Endothelial cell of umbilical vein (primary cell): ENCODE measurements at regions of chr15 and their contacts with region 1.

Region 1: DNA sequence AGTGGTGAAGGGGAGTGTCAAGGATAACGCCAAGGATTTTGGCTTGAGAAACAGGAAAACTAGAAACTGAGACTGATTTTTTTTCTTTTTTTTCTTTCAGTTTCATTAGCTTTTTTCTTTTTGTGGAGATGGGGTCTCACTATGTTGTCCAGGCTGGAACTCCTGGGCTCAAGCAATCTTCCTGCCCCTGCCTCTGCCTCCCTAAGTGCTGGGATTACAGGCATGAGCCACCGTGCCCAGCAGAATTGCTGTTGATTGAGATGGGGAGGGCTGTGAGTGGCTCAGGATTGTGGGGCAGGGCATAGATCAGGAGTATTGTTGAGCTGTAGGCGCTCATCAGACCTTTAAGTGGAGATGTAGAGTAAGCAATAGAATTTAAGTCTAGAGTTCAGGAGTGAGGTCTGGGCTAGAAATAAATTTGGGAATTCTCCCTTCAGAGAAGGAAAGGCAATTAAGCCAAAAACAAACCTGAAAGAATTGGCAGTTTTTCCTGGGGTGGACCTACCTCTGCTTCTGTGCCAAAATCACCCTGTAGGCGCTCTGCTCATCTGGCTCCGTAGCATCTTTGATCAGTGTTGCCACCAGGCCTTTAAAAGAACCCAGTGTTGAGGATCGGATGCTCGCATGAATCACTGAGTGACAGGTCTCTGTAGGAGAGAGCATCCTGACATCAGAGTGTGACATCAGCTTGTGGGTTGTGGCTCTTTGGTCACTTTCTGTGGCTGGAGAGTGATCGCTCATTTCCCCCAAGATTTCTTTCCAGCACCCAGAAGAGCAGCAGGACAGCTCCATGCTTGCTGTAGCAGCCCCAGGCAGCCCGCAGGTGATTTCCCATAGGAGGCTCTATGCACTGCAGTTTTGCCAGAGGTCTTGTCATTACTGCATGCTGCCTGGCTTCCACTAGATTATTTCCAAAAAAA is 15.8 kb downstream of the ABHD17C start:
- DNase-seq: no peak
- H3K4me3 ChIP-seq: no peak overlapping the region
- H3K27ac ChIP-seq: no peak overlapping the region
- H3K4me1 ChIP-seq: no peaks in the 10 kb centered on the region
- H3K27me3 ChIP-seq: no peaks in the 10 kb centered on the region
- CTCF ChIP-seq: no peak
- POLR2A ChIP-seq: no peak

Region 2: DNA sequence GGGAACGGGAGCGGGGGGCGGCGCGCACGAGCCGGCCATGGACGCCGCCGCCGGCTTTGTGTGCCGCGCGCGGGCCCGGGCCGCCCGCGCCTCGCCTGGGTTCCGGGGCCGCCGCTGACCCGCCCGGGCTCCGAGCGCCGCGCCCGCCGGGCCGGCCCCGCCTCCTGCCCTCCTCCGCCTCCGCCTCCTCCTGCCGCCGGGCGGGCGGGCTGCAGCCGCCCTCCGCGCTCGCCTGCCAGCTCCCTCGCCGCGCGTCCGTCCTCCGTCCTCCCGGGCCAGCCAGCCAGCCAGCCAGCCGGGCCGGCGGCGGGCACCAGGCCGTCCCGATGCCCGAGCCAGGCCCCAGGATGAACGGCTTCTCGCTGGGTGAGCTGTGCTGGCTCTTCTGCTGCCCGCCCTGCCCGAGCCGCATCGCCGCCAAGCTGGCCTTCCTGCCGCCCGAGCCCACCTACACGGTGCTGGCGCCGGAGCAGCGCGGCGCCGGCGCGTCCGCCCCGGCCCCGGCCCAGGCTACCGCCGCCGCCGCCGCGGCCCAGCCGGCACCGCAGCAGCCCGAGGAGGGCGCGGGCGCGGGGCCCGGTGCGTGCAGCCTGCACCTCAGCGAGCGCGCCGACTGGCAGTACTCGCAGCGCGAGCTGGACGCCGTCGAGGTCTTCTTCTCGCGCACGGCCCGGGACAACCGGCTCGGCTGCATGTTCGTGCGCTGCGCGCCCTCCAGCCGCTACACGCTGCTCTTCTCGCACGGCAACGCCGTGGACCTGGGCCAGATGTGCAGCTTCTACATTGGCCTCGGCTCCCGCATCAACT is 15.6 kb before region 1 on chr15 and contains the start of gene ABHD17C:
- CTCF ChIA-PET with region 1: interaction called, 10 read pairs
- POLR2A ChIA-PET with region 1: no interaction called
- dilution Hi-C with region 1: no loop called
- intact Hi-C with region 1: no loop called
- DNase-seq: peak; percentile 51
- H3K4me3 ChIP-seq: peak within 1 kb of the TSS; percentile 80 to 96 (median 85)
- H3K27ac ChIP-seq: peak within 1 kb of the TSS; percentile 60
- H3K4me1 ChIP-seq: peaks cover 16% of the 10 kb centered on the region
- H3K27me3 ChIP-seq: no peaks in the 10 kb centered on the region
- CTCF ChIP-seq: no peak
- POLR2A ChIP-seq: peak; percentile 64
- total RNA-seq, gene ABHD17C: 8.2 and 10.9 TPM in 2 replicates

Region 3: GRCh38 chr15:80749541-80749968 is 38.7 kb after region 1 on chr15:
- CTCF ChIA-PET with region 1: no interaction called
- POLR2A ChIA-PET with region 1: no interaction called
- dilution Hi-C with region 1: no loop called
- intact Hi-C with region 1: no loop called
- DNase-seq: no peak
- H3K4me3 ChIP-seq: no peak overlapping the region
- H3K27ac ChIP-seq: no peak overlapping the region
- H3K4me1 ChIP-seq: peaks cover 7% of the 10 kb centered on the region
- H3K27me3 ChIP-seq: no peaks in the 10 kb centered on the region
- CTCF ChIP-seq: no peak
- POLR2A ChIP-seq: no peak